ENCODE measurements at regions of chr1 and their contacts with region 1.

Region 1: GRCh38 chr1:152034646-152035405 is 2.0 kb downstream of the S100A11 start:
- DNase-seq: peak; percentile 92
- H3K4me3 Mint-ChIP-seq: peak overlapping the region; percentile 98
- H3K27ac Mint-ChIP-seq: peak overlapping the region; percentile 98
- H3K4me1 Mint-ChIP-seq: peaks cover 47% of the 10 kb centered on the region
- H3K27me3 Mint-ChIP-seq: no peaks in the 10 kb centered on the region

Region 2: GRCh38 chr1:151945725-151946364 is 89.0 kb before region 1 on chr1:
- intact Hi-C with region 1: loop called (anchors 1 kb)
- DNase-seq: peak; percentile 94
- H3K4me3 Mint-ChIP-seq: peak overlapping the region; percentile 74
- H3K27ac Mint-ChIP-seq: peak overlapping the region; percentile 94
- H3K4me1 Mint-ChIP-seq: peaks cover 31% of the 10 kb centered on the region
- H3K27me3 Mint-ChIP-seq: no peaks in the 10 kb centered on the region

Region 3: DNA sequence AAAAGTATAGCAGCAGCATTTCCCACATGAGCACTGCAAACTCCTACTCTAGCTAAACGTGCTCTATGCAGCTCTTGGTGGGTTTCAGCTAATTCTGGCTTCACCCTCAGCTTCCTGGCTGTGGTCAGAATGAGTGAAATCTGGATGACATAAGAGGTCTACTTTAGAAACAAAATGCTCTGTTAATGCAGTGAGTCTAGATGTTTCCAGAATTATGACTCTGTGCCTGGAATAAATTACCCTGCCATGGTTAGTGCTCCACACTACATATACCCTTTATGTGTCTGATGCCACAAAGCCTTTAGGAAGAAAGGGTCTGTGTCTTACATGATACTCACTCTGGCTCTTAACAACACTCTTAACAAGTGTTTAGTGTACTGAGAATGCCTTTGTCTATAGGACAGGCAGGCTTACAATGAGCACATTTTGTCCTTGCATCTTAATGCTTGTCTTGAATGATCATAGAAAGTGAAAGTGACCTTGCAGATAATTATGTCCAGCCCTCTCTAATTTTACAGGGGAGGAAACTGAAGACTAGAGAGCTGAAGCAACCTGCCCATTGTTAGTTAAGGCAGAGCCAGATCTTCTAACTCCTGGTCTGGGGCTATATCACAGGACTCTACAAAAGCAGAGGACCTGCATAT is 50.4 kb before region 1 on chr1:
- intact Hi-C with region 1: loop called (anchors 5 kb)
- DNase-seq: peak; percentile 81
- H3K4me3 Mint-ChIP-seq: peak overlapping the region; percentile 78
- H3K27ac Mint-ChIP-seq: peak overlapping the region; percentile 92
- H3K4me1 Mint-ChIP-seq: peaks cover 53% of the 10 kb centered on the region
- H3K27me3 Mint-ChIP-seq: no peaks in the 10 kb centered on the region

Region 4: DNA sequence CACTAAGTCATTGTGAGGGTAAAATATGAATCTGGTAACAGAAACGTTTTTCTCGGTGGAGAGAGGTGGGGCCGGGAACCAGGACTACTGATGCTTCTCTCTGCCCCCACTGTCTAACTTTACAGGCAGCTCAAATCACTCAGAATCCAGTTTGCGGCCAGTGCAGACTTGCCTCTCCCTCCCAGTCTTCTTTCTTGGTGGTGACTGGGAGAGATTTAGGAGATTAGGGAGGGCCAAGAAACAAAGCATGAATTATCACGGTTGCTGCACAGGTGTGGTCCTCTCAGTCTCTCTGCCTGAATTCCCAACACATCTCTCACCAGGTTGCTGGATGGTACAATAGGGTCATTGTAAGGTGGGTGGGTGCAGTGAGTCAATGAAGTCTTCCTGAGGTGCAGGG is 10.7 kb before region 1 on chr1:
- intact Hi-C with region 1: no loop called
- DNase-seq: no peak
- H3K4me3 Mint-ChIP-seq: no peak overlapping the region
- H3K27ac Mint-ChIP-seq: no peak overlapping the region
- H3K4me1 Mint-ChIP-seq: peaks cover 5% of the 10 kb centered on the region
- H3K27me3 Mint-ChIP-seq: peaks cover 3% of the 10 kb centered on the region